ENCODE measurements at regions of chr3 and their contacts with region 1.

Region 1: DNA sequence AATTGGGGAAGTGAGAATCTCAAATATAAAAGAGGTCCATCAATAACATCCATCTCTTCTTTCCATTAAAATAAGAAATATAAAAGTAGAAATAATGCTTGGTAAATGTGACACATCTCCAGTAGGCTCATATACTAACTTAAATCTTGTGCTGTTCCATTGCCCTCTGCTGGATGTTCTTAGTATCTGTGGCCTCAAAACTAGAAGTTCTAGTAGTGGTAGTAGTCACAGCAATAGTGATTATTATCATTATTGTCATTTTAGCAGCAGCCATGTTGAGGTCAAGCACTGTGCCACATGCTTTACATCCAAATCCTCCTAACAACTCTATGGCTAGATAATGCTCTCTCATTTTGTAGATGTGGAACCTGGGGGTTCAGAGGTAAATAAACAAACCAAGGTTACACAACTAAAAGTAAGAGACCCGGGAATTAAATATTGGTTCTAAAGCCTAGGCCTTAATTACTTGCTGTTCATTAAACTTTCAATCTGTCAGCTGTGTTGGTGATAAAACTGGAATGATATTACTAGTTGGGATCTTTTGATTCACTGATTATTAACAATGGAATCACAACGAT is 20.2 kb upstream of the BTLA start:
- DNase-seq: peak in 7 of 9 donors; percentile 41 to 74 (median 63)
- ATAC-seq: peak; percentile 94
- H3K4me3 ChIP-seq: no peak overlapping the region
- H3K4me3 Mint-ChIP-seq: no peak overlapping the region
- H3K27ac ChIP-seq: no peak overlapping the region
- H3K27ac Mint-ChIP-seq: peak overlapping the region in 3 of 9 donors; percentile 4 to 78 (median 25)
- H3K4me1 ChIP-seq: peaks cover 0 to under 1% of the 10 kb centered on the region in 2 donors
- H3K4me1 Mint-ChIP-seq: peaks cover 5 to 25% (median 19%) of the 10 kb centered on the region in 7 donors
- H3K27me3 ChIP-seq: no peaks in the 10 kb centered on the region
- H3K27me3 Mint-ChIP-seq: no peaks in the 10 kb centered on the region

Region 2: GRCh38 chr3:112136959-112137693 is 382.4 kb before region 1 on chr3:
- CTCF ChIA-PET with region 1: interaction called, 11 read pairs
- POLR2A ChIA-PET with region 1: no interaction called
- intact Hi-C with region 1: loop called (anchors 1 to 2 kb)
- DNase-seq: peak in 5 of 9 donors; percentile 42 to 55 (median 53)
- ATAC-seq: no peak
- H3K4me3 ChIP-seq: no peak overlapping the region
- H3K4me3 Mint-ChIP-seq: peak overlapping the region in 2 of 10 donors; percentile 3 to 21
- H3K27ac ChIP-seq: no peak overlapping the region
- H3K27ac Mint-ChIP-seq: peak overlapping the region in 8 of 9 donors; percentile 0 to 99 (median 96)
- H3K4me1 ChIP-seq: peaks cover 19 to 45% of the 10 kb centered on the region in 2 donors
- H3K4me1 Mint-ChIP-seq: peaks cover 31 to 76% (median 60%) of the 10 kb centered on the region in 7 donors
- H3K27me3 ChIP-seq: no peaks in the 10 kb centered on the region
- H3K27me3 Mint-ChIP-seq: no peaks in the 10 kb centered on the region

Region 3: DNA sequence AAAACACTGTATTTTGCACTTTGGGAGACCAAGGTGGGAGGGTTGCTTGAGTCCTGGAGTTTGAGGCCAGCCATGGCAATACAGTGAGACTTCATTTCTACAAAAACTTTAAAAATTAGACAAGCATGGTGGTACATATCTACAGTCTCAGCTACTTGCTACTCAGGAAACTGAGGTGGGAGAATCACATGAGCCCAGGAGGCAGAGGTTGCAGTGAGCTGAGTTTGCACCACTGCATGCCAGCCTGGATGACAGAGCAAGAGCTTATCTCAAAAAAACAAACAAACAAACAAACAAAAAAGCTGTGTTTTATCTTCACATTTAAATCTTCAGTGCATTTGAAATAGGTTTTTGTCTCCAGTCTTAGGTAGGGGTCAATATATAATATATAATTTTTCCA is 220.7 kb before region 1 on chr3:
- CTCF ChIA-PET with region 1: interaction called, 31 read pairs
- POLR2A ChIA-PET with region 1: no interaction called
- intact Hi-C with region 1: loop called (anchors 1 kb)
- DNase-seq: no peak
- ATAC-seq: no peak
- H3K4me3 ChIP-seq: no peak overlapping the region
- H3K4me3 Mint-ChIP-seq: peak overlapping the region in 1 of 10 donors; percentile 50
- H3K27ac ChIP-seq: no peak overlapping the region
- H3K27ac Mint-ChIP-seq: peak overlapping the region in 2 of 9 donors; percentile 7 to 16
- H3K4me1 ChIP-seq: peaks cover 0 to 7% of the 10 kb centered on the region in 2 donors
- H3K4me1 Mint-ChIP-seq: peaks cover 17 to 35% (median 21%) of the 10 kb centered on the region in 7 donors
- H3K27me3 ChIP-seq: no peaks in the 10 kb centered on the region
- H3K27me3 Mint-ChIP-seq: no peaks in the 10 kb centered on the region

Region 4: DNA sequence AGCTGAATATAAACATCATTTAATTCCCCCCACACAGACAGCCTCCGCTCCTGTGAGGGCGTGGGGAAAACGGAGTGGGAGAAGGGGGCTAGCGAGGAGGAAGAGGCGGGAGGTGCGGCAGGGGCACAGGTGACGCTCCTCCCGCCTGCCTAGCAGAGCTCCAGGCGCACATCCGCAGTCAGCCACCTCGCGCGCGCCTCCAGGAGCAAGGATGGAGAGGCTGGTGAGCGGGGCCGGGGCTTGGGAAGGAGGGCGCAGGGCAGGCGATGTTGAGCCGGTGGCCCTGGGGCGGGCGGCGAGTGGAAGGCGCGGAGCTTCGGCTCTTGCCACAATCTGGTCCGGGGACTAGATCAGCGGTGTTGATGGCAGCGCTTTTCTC is 186.5 kb before region 1 on chr3 and contains the start of gene CD200:
- CTCF ChIA-PET with region 1: interaction called, 24 read pairs
- POLR2A ChIA-PET with region 1: interaction called, 4 read pairs
- intact Hi-C with region 1: loop called in 1 of 2 experiments (anchors 2 kb)
- DNase-seq: peak; percentile 25 to 69 (median 42)
- ATAC-seq: peak; percentile 79
- H3K4me3 ChIP-seq: peak within 1 kb of the TSS; percentile 78
- H3K4me3 Mint-ChIP-seq: peak within 1 kb of the TSS; percentile 82 to 95 (median 92)
- H3K27ac ChIP-seq: peak within 1 kb of the TSS; percentile 62
- H3K27ac Mint-ChIP-seq: peak within 1 kb of the TSS; percentile 71 to 90 (median 78)
- H3K4me1 ChIP-seq: peaks cover 0 to 6% of the 10 kb centered on the region in 2 donors
- H3K4me1 Mint-ChIP-seq: peaks cover 14 to 56% (median 47%) of the 10 kb centered on the region in 7 donors
- H3K27me3 ChIP-seq: no peaks in the 10 kb centered on the region
- H3K27me3 Mint-ChIP-seq: no peaks in the 10 kb centered on the region
- total RNA-seq, gene CD200: 2.5 to 9.1 (median 2.9) TPM

Region 5: GRCh38 chr3:112350181-112350825 is 169.2 kb before region 1 on chr3:
- CTCF ChIA-PET with region 1: no interaction called
- POLR2A ChIA-PET with region 1: no interaction called
- intact Hi-C with region 1: no loop called
- DNase-seq: no peak
- ATAC-seq: no peak
- H3K4me3 ChIP-seq: no peak overlapping the region
- H3K4me3 Mint-ChIP-seq: no peak overlapping the region
- H3K27ac ChIP-seq: no peak overlapping the region
- H3K27ac Mint-ChIP-seq: peak overlapping the region in 3 of 9 donors; percentile 1 to 55 (median 29)
- H3K4me1 ChIP-seq: no peaks in the 10 kb centered on the region
- H3K4me1 Mint-ChIP-seq: peaks cover 0 to 39% (median 11%) of the 10 kb centered on the region in 7 donors
- H3K27me3 ChIP-seq: no peaks in the 10 kb centered on the region
- H3K27me3 Mint-ChIP-seq: no peaks in the 10 kb centered on the region

Region 6: DNA sequence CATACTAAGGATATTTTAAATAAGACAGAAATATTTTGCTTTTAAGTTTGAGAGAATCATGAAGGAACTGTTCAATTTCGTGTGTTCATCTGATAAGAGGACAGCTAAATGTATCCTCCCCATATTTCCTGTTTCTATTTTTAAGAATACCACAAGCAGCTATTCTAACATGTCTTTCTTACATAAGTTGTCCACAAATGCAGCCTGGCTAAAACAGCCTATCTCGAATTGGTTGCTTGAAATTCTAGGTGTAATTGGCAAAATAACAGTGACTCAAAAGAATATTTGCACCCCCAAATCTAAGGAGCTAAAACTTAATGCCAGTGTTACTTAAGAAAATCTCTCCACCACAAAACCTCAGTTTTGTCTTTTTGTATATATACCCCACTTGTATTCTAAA is 55.2 kb before region 1 on chr3:
- CTCF ChIA-PET with region 1: interaction called, 3 read pairs
- POLR2A ChIA-PET with region 1: no interaction called
- intact Hi-C with region 1: loop called (anchors 2 kb)
- DNase-seq: peak in 7 of 9 donors; percentile 28 to 56 (median 47)
- ATAC-seq: peak; percentile 83
- H3K4me3 ChIP-seq: peak overlapping the region; percentile 7
- H3K4me3 Mint-ChIP-seq: peak overlapping the region; percentile 39 to 84 (median 74)
- H3K27ac ChIP-seq: peak overlapping the region; percentile 43
- H3K27ac Mint-ChIP-seq: peak overlapping the region; percentile 55 to 96 (median 86)
- H3K4me1 ChIP-seq: peaks cover 54 to 63% of the 10 kb centered on the region in 2 donors
- H3K4me1 Mint-ChIP-seq: peaks cover 40 to 95% (median 88%) of the 10 kb centered on the region in 7 donors
- H3K27me3 ChIP-seq: no peaks in the 10 kb centered on the region
- H3K27me3 Mint-ChIP-seq: no peaks in the 10 kb centered on the region

Region 7: GRCh38 chr3:112531358-112531781 is 11.9 kb after region 1 on chr3:
- CTCF ChIA-PET with region 1: interaction called, 4 read pairs
- POLR2A ChIA-PET with region 1: no interaction called
- intact Hi-C with region 1: loop called in 1 of 2 experiments (anchors 1 kb)
- DNase-seq: peak in 5 of 9 donors; percentile 25 to 40 (median 25)
- ATAC-seq: peak; percentile 45
- H3K4me3 ChIP-seq: no peak overlapping the region
- H3K4me3 Mint-ChIP-seq: no peak overlapping the region
- H3K27ac ChIP-seq: no peak overlapping the region
- H3K27ac Mint-ChIP-seq: peak overlapping the region in 6 of 9 donors; percentile 7 to 72 (median 14)
- H3K4me1 ChIP-seq: no peaks in the 10 kb centered on the region
- H3K4me1 Mint-ChIP-seq: peaks cover 0 to 5% (median 3%) of the 10 kb centered on the region in 7 donors
- H3K27me3 ChIP-seq: no peaks in the 10 kb centered on the region
- H3K27me3 Mint-ChIP-seq: no peaks in the 10 kb centered on the region

Region 8: GRCh38 chr3:112555535-112556170 is 36.1 kb after region 1 on chr3:
- CTCF ChIA-PET with region 1: no interaction called
- POLR2A ChIA-PET with region 1: no interaction called
- intact Hi-C with region 1: no loop called
- DNase-seq: no peak
- ATAC-seq: peak; percentile 54
- H3K4me3 ChIP-seq: no peak overlapping the region
- H3K4me3 Mint-ChIP-seq: peak overlapping the region in 4 of 10 donors; percentile 0 to 41 (median 16)
- H3K27ac ChIP-seq: no peak overlapping the region
- H3K27ac Mint-ChIP-seq: peak overlapping the region in 3 of 9 donors; percentile 32 to 52 (median 44)
- H3K4me1 ChIP-seq: peaks cover 8 to 13% of the 10 kb centered on the region in 2 donors
- H3K4me1 Mint-ChIP-seq: peaks cover 39 to 75% (median 68%) of the 10 kb centered on the region in 7 donors
- H3K27me3 ChIP-seq: no peaks in the 10 kb centered on the region
- H3K27me3 Mint-ChIP-seq: no peaks in the 10 kb centered on the region